Cardiac septum (tissue), 1 donor: ENCODE measurements at regions of chr16 and their contacts with region 1.

Region 1: DNA sequence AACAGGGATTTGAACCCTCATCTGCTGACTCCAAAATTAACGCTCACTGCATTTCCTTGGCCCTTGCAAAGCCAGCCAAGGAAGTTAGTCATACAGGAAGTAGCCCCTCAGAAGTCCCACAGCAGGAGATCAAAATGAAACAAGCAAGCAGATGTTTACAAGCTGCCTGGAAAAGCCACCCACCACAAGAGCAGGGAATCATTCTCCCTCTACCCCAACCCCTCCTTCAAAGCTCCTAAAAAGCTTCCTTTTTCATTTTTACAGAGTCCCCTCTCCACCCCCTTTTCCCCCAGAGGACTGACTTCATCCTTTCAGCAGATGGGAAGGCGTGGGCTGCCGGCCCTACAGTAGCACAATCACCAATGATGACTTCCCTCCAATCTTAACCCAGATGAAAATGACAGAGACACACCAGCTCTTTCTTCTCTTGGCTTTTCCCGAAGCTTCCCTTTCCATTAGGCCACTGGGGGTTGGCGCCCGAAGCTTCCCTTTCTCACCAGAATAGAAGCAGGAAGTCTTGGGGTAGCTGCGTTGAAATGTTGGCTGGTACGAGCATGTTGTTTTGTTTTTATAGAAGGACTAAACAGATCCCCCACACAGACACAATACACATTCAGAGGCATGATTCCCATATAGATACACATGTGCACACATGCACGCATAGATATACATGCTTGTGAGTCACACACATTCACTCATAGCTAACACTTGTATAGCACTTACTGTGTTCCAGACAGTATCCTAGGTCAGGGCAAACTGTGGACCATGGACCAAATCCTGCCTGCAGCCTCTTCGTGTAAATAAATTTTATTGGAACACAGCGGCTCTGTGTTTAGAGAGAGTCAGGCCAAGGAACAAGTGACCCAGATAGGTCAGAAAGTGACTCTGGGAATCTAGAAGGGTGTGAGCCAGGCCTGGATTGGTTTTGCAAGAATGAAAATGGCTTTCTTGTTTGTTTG is 17.4 kb downstream of the ITPRIPL2 start:
- DNase-seq: peak; percentile 73

Region 2: GRCh38 chr16:19113453-19114351 is 17.4 kb before region 1 on chr16 and contains the start of gene ITPRIPL2:
- intact Hi-C with region 1: loop called (anchors 2 kb)
- DNase-seq: peak; percentile 91
- total RNA-seq, gene ITPRIPL2: 24.6 TPM

Region 3: GRCh38 chr16:19179546-19180490 is 48.7 kb after region 1 on chr16:
- intact Hi-C with region 1: loop called (anchors 5 kb)
- DNase-seq: peak; percentile 79